ENCODE measurements at regions of chr7 and their contacts with region 1.

Region 1: DNA sequence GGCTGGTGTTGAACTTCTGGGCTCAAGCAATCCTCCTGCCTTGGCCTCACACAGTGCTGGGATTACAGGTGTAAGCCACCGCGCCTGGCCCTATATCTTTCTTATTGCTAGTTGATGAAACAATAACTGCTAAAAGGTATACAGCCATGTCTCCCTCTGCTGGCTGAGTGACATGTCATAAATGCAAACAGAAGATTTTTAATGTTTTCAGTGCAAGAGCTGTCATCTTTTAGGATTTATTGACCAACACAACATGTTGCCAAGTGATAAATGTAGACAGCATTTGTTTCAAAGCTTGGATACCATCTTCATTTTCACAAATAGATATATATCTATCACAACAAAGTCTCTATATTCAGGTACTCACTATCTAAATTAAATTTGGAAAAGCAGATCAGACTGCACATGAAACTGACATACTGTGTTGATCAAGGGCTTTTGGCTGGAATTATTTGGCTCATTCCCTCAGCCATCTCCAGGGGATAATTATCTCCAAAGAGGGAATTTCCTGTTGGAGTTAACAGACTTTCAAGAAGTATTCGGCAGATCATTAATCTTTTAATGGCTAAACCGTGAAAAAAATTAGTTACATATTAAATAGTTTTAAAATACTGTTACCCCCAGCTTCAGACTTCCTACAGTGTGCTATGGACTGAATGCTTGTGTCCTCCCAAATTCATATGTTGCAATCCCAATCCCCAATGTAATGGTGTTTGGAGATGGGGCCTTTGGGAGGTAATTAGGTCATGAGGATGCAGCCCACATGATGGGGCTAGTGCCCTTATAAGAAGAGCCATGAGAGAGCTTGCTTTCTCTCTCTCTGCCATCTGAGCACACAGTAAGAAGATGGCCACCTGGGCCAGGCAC is 41.3 kb upstream of the SRPK2 start:
- DNase-seq: peak; percentile 68
- H3K4me3 Mint-ChIP-seq: no peak overlapping the region
- H3K27ac Mint-ChIP-seq: no peak overlapping the region
- H3K4me1 Mint-ChIP-seq: no peaks in the 10 kb centered on the region
- H3K27me3 Mint-ChIP-seq: no peaks in the 10 kb centered on the region
- CTCF ChIP-seq: peak; percentile 57

Region 2: GRCh38 chr7:105112440-105113418 is 317.2 kb before region 1 on chr7:
- CTCF ChIA-PET with region 1: interaction called, 4 read pairs
- POLR2A ChIA-PET with region 1: no interaction called
- intact Hi-C with region 1: loop called (anchors 5 kb)
- DNase-seq: no peak
- H3K4me3 Mint-ChIP-seq: no peak overlapping the region
- H3K27ac Mint-ChIP-seq: peak overlapping the region; percentile 36
- H3K4me1 Mint-ChIP-seq: no peaks in the 10 kb centered on the region
- H3K27me3 Mint-ChIP-seq: no peaks in the 10 kb centered on the region
- CTCF ChIP-seq: no peak

Region 3: DNA sequence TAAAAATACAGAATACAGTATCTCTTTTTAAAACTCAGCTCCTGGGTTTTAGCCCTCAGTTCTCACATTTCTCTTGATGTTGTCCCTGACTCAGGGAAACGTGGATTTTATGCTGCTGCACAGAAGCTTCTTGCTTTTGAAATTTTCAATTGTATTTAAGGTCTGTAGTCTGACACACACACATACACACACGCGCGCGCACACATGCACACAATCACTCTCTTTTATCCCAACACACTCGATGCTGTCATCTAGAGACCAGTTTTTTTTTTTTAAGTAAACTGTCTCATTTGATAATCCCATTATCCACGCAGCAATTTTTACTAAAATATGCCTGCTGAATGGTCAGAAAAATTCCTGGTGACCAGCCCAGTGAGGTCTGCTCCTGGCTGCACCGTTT is 307.4 kb before region 1 on chr7:
- CTCF ChIA-PET with region 1: interaction called, 10 read pairs
- POLR2A ChIA-PET with region 1: no interaction called
- intact Hi-C with region 1: no loop called
- DNase-seq: no peak
- H3K4me3 Mint-ChIP-seq: no peak overlapping the region
- H3K27ac Mint-ChIP-seq: no peak overlapping the region
- H3K4me1 Mint-ChIP-seq: no peaks in the 10 kb centered on the region
- H3K27me3 Mint-ChIP-seq: no peaks in the 10 kb centered on the region
- CTCF ChIP-seq: no peak

Region 4: GRCh38 chr7:105198223-105198622 is 231.8 kb before region 1 on chr7:
- CTCF ChIA-PET with region 1: no interaction called
- POLR2A ChIA-PET with region 1: no interaction called
- intact Hi-C with region 1: no loop called
- DNase-seq: no peak
- H3K4me3 Mint-ChIP-seq: no peak overlapping the region
- H3K27ac Mint-ChIP-seq: peak overlapping the region; percentile 24
- H3K4me1 Mint-ChIP-seq: peaks cover 7% of the 10 kb centered on the region
- H3K27me3 Mint-ChIP-seq: no peaks in the 10 kb centered on the region
- CTCF ChIP-seq: no peak

Region 5: DNA sequence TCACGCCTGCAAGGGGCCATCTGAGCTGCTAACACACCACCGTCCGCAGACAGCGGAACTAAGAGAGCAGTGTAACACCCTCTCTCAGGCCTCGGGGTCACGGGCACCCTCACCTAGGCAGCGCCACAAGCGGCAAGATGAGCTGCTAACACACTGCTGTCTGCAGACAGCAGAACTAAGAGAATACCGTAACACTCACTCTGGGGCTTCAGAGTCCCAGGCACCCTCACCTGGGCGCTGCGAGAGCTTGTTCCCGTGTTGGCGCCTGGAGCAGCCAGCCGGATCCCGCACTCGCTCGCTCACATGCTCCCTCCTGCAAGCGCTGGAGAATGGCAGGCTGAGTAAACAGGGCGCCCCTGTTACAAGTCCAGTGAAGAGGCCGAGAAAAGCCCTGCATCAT is 201.4 kb before region 1 on chr7:
- CTCF ChIA-PET with region 1: no interaction called
- POLR2A ChIA-PET with region 1: no interaction called
- intact Hi-C with region 1: no loop called
- DNase-seq: no peak
- H3K4me3 Mint-ChIP-seq: no peak overlapping the region
- H3K27ac Mint-ChIP-seq: no peak overlapping the region
- H3K4me1 Mint-ChIP-seq: peaks cover 33% of the 10 kb centered on the region
- H3K27me3 Mint-ChIP-seq: no peaks in the 10 kb centered on the region
- CTCF ChIP-seq: no peak

Region 6: DNA sequence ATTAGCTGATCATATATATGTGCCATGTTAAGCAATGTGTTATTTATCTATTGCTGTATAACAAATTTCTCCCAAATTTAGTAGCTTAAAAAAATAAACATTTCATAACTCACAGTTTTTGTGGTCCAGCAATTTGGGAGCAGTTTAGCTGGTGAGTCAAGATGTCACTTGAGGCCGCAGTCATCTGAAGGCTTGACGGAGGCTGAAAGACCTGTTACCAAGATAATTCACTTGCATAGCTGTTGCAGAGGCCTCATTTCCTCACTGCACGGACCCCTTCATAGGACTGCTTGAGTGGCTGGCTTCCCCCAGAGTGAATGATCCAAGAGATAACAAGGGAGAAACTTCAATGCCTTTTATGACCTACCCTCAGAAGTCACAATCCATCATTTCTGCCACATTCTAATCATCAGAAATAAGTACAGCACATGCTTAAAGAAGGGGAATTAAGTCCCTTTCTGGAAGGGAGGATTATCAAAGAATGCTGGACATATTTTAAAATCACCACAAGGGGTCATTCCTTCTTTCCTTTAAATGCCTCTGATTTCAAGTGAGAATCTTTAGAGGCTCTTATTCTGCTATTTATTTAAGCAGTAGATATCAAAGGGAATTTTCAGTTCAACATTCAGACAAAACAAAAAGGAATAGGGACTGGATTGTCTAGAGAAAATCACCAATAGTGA is 30.8 kb before region 1 on chr7:
- CTCF ChIA-PET with region 1: interaction called, 10 read pairs
- POLR2A ChIA-PET with region 1: no interaction called
- intact Hi-C with region 1: loop called (anchors 1 kb)
- DNase-seq: no peak
- H3K4me3 Mint-ChIP-seq: no peak overlapping the region
- H3K27ac Mint-ChIP-seq: no peak overlapping the region
- H3K4me1 Mint-ChIP-seq: peaks cover 7% of the 10 kb centered on the region
- H3K27me3 Mint-ChIP-seq: no peaks in the 10 kb centered on the region
- CTCF ChIP-seq: peak; percentile 31

Region 7: DNA sequence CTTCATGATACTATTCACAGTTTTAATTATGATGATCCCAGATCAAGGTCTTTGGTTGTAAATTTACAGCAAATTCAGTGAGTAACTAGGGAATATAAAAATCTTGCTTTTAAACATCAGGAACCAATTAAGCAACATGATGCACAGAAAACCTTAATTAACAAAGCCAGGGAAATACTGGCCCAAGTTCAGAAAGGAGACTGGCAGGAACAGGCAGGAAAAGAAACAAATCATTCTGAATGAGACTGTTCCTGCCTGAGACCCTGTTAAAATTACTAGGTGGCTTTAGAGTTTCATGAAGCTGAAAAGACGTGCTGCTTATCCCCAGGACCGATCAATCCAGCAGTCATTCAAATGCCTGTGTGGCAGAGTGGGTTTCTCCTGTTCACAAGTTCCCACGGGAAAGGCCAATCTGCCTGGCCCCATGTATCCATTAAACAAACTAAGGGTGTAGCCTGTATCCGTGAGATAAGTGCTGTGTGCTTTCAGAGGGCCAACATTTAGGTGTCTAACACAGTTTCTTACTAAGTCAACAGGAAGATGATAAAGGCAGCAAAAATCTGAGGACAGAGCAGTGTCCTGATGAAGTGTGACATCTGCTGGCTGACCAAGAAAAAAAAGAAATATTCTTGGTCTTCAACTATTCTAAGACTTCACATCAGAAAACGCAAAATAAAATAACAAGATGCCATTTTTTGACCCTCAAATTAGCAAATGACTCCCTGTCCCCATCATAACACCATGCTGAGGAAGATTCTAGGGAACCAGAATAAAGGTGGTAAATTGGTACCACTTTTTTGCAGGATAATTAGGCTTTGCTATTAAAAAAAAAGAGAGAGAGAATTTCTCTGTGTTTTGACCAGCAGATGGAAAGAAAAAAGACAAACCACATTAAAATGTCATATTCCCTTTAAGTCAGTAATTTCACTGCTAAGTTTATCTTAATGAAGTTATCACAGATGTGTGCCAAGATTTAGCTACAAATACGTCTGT is 57.9 kb after region 1 on chr7:
- CTCF ChIA-PET with region 1: interaction called, 4 read pairs
- POLR2A ChIA-PET with region 1: no interaction called
- intact Hi-C with region 1: loop called (anchors 2 kb)
- DNase-seq: peak; percentile 23
- H3K4me3 Mint-ChIP-seq: no peak overlapping the region
- H3K27ac Mint-ChIP-seq: peak overlapping the region; percentile 67
- H3K4me1 Mint-ChIP-seq: no peaks in the 10 kb centered on the region
- H3K27me3 Mint-ChIP-seq: no peaks in the 10 kb centered on the region
- CTCF ChIP-seq: peak; percentile 43

Region 8: GRCh38 chr7:105493923-105494315 is 63.9 kb after region 1 on chr7:
- CTCF ChIA-PET with region 1: interaction called, 10 read pairs
- POLR2A ChIA-PET with region 1: no interaction called
- intact Hi-C with region 1: loop called (anchors 2 kb)
- DNase-seq: no peak
- H3K4me3 Mint-ChIP-seq: no peak overlapping the region
- H3K27ac Mint-ChIP-seq: no peak overlapping the region
- H3K4me1 Mint-ChIP-seq: no peaks in the 10 kb centered on the region
- H3K27me3 Mint-ChIP-seq: no peaks in the 10 kb centered on the region
- CTCF ChIP-seq: no peak

Measured in MCF 10A (cell line).